MCF 10A (cell line): ENCODE measurements at regions of chr2 and their contacts with region 1.

Region 1: GRCh38 chr2:219452838-219453317 is 18.2 kb downstream of the SPEG start:
- DNase-seq: peak; percentile 99
- H3K4me3 Mint-ChIP-seq: peak overlapping the region; percentile 64
- H3K27ac Mint-ChIP-seq: peak overlapping the region; percentile 83
- H3K4me1 Mint-ChIP-seq: peaks cover 26% of the 10 kb centered on the region
- H3K27me3 Mint-ChIP-seq: no peaks in the 10 kb centered on the region
- CTCF ChIP-seq: no peak

Region 2: GRCh38 chr2:218568190-218569037 is 884.5 kb before region 1 on chr2 and contains the starts of genes CNOT9 and USP37:
- CTCF ChIA-PET with region 1: no interaction called
- POLR2A ChIA-PET with region 1: no interaction called
- intact Hi-C with region 1: no loop called
- DNase-seq: peak; percentile 98
- H3K4me3 Mint-ChIP-seq: peak within 1 kb of the TSS; percentile 92
- H3K27ac Mint-ChIP-seq: peak within 1 kb of the TSS; percentile 86
- H3K4me1 Mint-ChIP-seq: peaks cover 40% of the 10 kb centered on the region
- H3K27me3 Mint-ChIP-seq: no peaks in the 10 kb centered on the region
- CTCF ChIP-seq: no peak
- total RNA-seq, gene CNOT9: 64.9 and 66.1 TPM in 2 replicates
- total RNA-seq, gene USP37: 11.6 and 16.4 TPM in 2 replicates

Region 3: DNA sequence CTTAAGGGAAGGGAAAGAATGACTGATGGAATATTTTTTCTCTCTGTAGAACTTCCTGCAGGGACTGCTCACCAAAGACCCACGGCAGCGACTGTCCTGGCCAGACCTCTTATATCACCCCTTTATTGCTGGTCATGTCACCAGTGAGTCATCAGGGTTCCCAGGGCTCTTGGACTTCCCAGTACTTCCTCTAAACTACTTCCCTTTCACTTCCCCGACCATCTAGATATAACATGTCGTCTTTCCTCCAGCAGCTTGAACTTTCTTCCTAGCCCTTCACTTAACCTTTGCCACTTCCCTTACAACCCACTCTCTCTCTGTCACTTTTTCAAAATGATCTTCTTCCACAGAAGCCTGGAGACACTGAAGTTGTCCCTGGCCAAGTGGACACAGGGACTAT is 773.8 kb before region 1 on chr2:
- CTCF ChIA-PET with region 1: no interaction called
- POLR2A ChIA-PET with region 1: no interaction called
- intact Hi-C with region 1: no loop called
- DNase-seq: no peak
- H3K4me3 Mint-ChIP-seq: no peak overlapping the region
- H3K27ac Mint-ChIP-seq: no peak overlapping the region
- H3K4me1 Mint-ChIP-seq: peaks cover 5% of the 10 kb centered on the region
- H3K27me3 Mint-ChIP-seq: no peaks in the 10 kb centered on the region
- CTCF ChIP-seq: no peak

Region 4: GRCh38 chr2:219441451-219442255 is 11.2 kb before region 1 on chr2:
- CTCF ChIA-PET with region 1: interaction called, 8 read pairs
- POLR2A ChIA-PET with region 1: interaction called, 13 read pairs
- intact Hi-C with region 1: no loop called
- DNase-seq: peak; percentile 48
- H3K4me3 Mint-ChIP-seq: peak overlapping the region; percentile 83
- H3K27ac Mint-ChIP-seq: no peak overlapping the region
- H3K4me1 Mint-ChIP-seq: peaks cover 35% of the 10 kb centered on the region
- H3K27me3 Mint-ChIP-seq: no peaks in the 10 kb centered on the region
- CTCF ChIP-seq: no peak